CD4-positive, alpha-beta T cell (primary cell): ENCODE measurements at regions of chr1 and their contacts with region 1.

Region 1: DNA sequence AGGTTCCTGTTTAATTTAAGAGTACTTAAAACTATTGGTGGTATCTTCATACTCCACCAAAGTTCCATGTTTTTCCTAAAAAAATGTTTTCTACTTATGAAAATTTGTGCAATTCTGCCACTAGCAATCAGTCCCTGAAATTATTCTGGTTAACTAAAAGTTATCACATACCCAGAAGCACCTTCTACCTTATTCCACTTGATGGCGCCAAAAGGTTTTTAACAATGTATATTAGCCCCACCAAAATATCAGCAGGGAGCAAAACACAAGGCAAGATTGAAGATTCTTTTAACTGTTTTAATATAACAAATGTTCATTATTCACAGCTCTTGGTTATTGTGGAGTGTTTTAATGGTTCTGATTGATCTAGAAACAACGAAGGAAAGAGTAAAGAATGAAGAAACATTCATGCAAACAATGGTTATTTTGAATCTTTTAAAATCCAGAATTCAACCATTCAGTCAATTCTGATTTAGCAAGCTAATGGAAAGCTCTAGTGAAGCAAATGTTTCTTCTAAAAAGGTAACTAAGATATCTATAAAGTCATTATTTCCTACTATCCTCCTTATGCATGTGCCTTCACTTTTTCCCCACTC is 67.2 kb downstream of the TTLL7 start:
- DNase-seq: peak in 5 of 14 experiments; percentile 1 to 64 (median 64)
- ATAC-seq: peak; percentile 76
- H3K4me3 ChIP-seq: no peak overlapping the region
- H3K4me3 Mint-ChIP-seq: no peak overlapping the region
- H3K27ac ChIP-seq: no peak overlapping the region
- H3K27ac Mint-ChIP-seq: no peak overlapping the region
- H3K4me1 ChIP-seq: no peaks in the 10 kb centered on the region
- H3K4me1 Mint-ChIP-seq: no peaks in the 10 kb centered on the region
- H3K27me3 ChIP-seq: no peaks in the 10 kb centered on the region
- H3K27me3 Mint-ChIP-seq: peaks cover 4% of the 10 kb centered on the region
- CTCF ChIP-seq: peak; percentile 73

Region 2: DNA sequence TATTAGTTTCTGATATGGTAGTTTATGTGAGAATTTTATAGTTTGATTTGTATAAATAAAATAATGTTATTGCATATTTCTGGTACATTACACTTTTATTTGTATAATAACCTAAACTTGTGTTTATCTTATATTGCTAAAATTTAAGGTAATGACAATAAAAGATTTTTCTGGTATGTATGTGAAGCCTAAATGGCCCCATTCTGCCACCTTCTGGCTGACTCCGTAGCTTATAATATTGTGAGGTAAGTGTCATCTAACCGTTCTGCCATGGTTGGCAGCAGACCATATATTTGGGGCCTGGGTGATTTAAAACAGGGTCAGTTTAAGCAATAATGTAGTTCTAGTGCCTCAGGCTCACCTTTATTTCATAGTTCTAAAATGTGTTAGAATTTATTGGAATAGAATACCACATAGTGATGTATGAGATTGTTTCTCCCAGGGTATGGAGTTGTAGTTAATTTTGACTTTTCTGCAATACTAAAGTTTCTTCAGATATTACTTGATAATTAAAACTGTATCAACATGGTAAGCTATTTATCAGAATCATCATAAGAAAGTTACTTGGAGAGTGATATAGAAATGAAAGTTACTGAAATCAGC is 191.1 kb after region 1 on chr1:
- CTCF ChIA-PET with region 1: interaction called, 4 read pairs
- POLR2A ChIA-PET with region 1: no interaction called
- intact Hi-C with region 1: loop called (anchors 1 kb)
- DNase-seq: peak; percentile 18 to 70 (median 41)
- ATAC-seq: peak; percentile 59
- H3K4me3 ChIP-seq: no peak overlapping the region
- H3K4me3 Mint-ChIP-seq: no peak overlapping the region
- H3K27ac ChIP-seq: no peak overlapping the region
- H3K27ac Mint-ChIP-seq: no peak overlapping the region
- H3K4me1 ChIP-seq: no peaks in the 10 kb centered on the region
- H3K4me1 Mint-ChIP-seq: no peaks in the 10 kb centered on the region
- H3K27me3 ChIP-seq: no peaks in the 10 kb centered on the region
- H3K27me3 Mint-ChIP-seq: no peaks in the 10 kb centered on the region
- CTCF ChIP-seq: peak; percentile 91

Region 3: DNA sequence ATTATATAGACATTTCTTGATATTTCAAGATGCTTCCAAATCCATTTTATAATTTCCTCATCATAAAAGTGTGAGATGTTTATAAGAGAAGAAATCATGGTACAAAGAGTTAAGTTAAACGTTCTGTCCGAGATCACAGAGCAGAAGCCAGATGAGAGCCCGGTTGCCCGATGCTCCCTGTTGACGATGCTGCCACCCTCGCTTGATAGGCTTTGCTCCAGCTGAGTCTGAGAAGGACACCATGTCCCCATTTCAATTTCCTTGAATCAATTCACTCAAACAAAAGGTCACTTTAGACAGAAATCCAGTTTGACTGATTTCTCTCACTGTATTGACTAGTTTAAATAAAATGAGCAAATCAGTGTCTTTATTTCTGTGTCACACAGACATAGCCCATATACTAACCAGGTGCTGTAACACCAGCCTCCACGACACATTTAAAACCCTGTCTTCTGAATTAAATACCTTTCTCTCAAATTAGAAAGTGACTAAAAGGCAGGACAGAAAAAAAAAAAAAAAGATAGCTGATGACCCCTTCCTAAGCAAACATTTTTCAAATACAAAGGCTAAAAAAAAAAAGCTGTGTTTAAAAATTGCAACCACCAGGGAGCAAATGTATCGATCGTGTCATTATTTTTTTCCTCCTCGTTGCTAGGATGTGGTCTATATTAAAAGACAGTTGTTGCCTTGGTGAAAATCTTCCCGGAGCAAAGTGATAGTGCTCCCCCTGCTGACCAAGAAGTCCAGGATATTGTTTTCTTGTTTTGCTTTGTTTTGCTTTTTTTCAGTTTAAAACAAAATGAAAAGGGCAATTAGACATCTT is 501.7 kb after region 1 on chr1:
- CTCF ChIA-PET with region 1: no interaction called
- POLR2A ChIA-PET with region 1: no interaction called
- intact Hi-C with region 1: loop called (anchors 5 to 10 kb)
- DNase-seq: peak in 12 of 14 experiments; percentile 21 to 91 (median 40)
- ATAC-seq: peak; percentile 79
- H3K4me3 ChIP-seq: peak overlapping the region; percentile 32
- H3K4me3 Mint-ChIP-seq: peak overlapping the region; percentile 68
- H3K27ac ChIP-seq: peak overlapping the region in 1 of 2 donors; percentile 39
- H3K27ac Mint-ChIP-seq: no peak overlapping the region
- H3K4me1 ChIP-seq: peaks cover 25% of the 10 kb centered on the region
- H3K4me1 Mint-ChIP-seq: peaks cover 11% of the 10 kb centered on the region
- H3K27me3 ChIP-seq: no peaks in the 10 kb centered on the region
- H3K27me3 Mint-ChIP-seq: no peaks in the 10 kb centered on the region
- CTCF ChIP-seq: peak; percentile 85

Region 4: DNA sequence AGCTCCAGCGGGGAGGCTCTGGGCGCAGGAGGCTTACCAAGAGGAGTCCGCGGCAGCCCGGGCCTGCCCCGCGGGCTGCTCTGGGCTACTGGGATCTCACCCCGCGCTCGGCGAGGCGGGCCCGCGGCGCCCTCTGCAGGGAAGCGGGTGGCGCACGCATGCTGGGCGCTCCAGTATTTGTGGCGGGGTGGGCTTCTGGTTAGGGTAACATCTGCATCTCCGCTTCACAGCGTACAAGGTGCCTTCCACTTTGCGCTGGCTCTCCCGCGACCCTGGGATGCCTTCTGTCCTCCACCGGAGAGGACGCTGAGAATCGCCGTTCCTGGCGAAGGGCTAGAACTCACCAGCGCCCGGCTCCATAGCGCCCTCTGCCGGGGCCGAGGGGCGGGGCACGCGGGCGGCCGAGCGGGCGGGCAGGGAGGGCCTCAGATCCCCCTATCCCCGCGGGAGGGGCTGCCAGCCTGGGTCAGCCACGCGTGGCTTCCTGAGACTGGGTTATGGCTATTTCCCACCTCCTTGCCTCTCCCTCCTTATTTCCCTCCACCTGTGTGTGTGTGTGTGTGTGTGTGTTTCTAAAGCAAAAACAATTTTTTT is 689.1 kb after region 1 on chr1:
- CTCF ChIA-PET with region 1: no interaction called
- POLR2A ChIA-PET with region 1: no interaction called
- intact Hi-C with region 1: loop called (anchors 2 to 5 kb)
- DNase-seq: peak; percentile 50 to 88 (median 74)
- ATAC-seq: peak; percentile 92
- H3K4me3 ChIP-seq: peak overlapping the region; percentile 64
- H3K4me3 Mint-ChIP-seq: peak overlapping the region; percentile 95
- H3K27ac ChIP-seq: no peak overlapping the region
- H3K27ac Mint-ChIP-seq: no peak overlapping the region
- H3K4me1 ChIP-seq: peaks cover 8% of the 10 kb centered on the region
- H3K4me1 Mint-ChIP-seq: peaks cover 12% of the 10 kb centered on the region
- H3K27me3 ChIP-seq: no peaks in the 10 kb centered on the region
- H3K27me3 Mint-ChIP-seq: no peaks in the 10 kb centered on the region
- CTCF ChIP-seq: peak; percentile 100